ENCODE measurements at regions of chr20 and their contacts with region 1.

Region 1: GRCh38 chr20:32902456-32903420 is 44.0 kb downstream of the EFCAB8 start:
- DNase-seq: peak; percentile 78
- H3K4me3 Mint-ChIP-seq: no peak overlapping the region
- H3K27ac Mint-ChIP-seq: no peak overlapping the region
- H3K4me1 Mint-ChIP-seq: peaks cover 12% of the 10 kb centered on the region
- H3K27me3 Mint-ChIP-seq: no peaks in the 10 kb centered on the region

Region 2: GRCh38 chr20:32789896-32790750 is 112.6 kb before region 1 on chr20:
- CTCF ChIA-PET with region 1: interaction called, 11 read pairs
- DNase-seq: peak; percentile 80
- H3K4me3 Mint-ChIP-seq: no peak overlapping the region
- H3K27ac Mint-ChIP-seq: no peak overlapping the region
- H3K4me1 Mint-ChIP-seq: peaks cover 30% of the 10 kb centered on the region
- H3K27me3 Mint-ChIP-seq: no peaks in the 10 kb centered on the region

Region 3: GRCh38 chr20:33005132-33005566 is 102.4 kb after region 1 on chr20:
- CTCF ChIA-PET with region 1: interaction called, 39 read pairs
- DNase-seq: peak; percentile 45
- H3K4me3 Mint-ChIP-seq: no peak overlapping the region
- H3K27ac Mint-ChIP-seq: no peak overlapping the region
- H3K4me1 Mint-ChIP-seq: peaks cover 2% of the 10 kb centered on the region
- H3K27me3 Mint-ChIP-seq: peaks cover 6% of the 10 kb centered on the region

Region 4: GRCh38 chr20:33097001-33097400 is 194.3 kb after region 1 on chr20:
- CTCF ChIA-PET with region 1: interaction called, 13 read pairs
- DNase-seq: no peak
- H3K4me3 Mint-ChIP-seq: no peak overlapping the region
- H3K27ac Mint-ChIP-seq: no peak overlapping the region
- H3K4me1 Mint-ChIP-seq: no peaks in the 10 kb centered on the region
- H3K27me3 Mint-ChIP-seq: peaks cover 7% of the 10 kb centered on the region